IMR-90 (cell line): ENCODE measurements at regions of chr3 and their contacts with region 1.

Region 1: DNA sequence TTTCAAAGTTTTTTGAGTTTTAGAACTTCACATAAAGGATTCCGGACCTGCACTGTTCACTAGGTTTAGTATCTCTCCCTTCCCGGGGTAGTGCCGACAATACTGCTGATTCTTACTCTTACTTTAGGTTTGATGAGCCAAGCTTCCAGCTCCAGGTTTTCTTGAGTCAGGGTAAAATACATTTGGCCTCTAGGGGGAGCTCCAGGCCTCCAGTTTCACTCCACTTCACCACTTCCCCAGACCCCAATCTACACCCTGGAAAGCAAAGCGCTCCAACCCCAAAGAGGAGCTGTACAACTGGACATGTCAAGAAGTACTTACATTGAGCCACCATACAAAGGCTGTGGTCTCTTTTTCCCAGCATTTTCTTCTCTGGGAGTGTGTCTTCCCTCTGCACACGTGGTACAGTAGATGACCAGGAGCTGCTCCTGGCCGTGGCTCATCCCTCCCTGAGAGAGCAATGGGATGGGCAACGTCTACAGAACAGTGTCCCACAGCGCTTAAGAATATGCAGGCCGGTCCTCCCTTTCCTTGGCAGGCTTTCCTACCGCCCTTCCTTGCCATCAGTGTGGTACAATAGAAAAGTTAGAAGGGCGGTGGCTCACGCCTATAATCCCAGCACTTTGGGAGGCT is 93.9 kb upstream of the CCDC80 start:
- DNase-seq: peak; percentile 78
- ATAC-seq: peak; percentile 81
- H3K4me3 ChIP-seq: no peak overlapping the region
- H3K27ac ChIP-seq: no peak overlapping the region
- H3K4me1 ChIP-seq: 0 out of 2 replicates have a peak, but pooled peaks cover 1% of the 10 kb centered on the region
- H3K27me3 ChIP-seq: no peaks in the 10 kb centered on the region
- CTCF ChIP-seq: peak; percentile 82
- POLR2A ChIP-seq: no peak
- RAD21 ChIP-seq: peak; percentile 86

Region 2: GRCh38 chr3:112293368-112294321 is 441.2 kb before region 1 on chr3 and contains the start of gene SLC9C1:
- CTCF ChIA-PET with region 1: no interaction called
- POLR2A ChIA-PET with region 1: no interaction called
- dilution Hi-C with region 1: no loop called
- in situ Hi-C with region 1: no loop called
- intact Hi-C with region 1: no loop called
- DNase-seq: peak; percentile 74
- ATAC-seq: peak; percentile 85
- H3K4me3 ChIP-seq: peak within 1 kb of the TSS; percentile 36
- H3K27ac ChIP-seq: peak within 1 kb of the TSS; percentile 35; the same call in 1 of the 2 replicates
- H3K4me1 ChIP-seq: no peaks in the 10 kb centered on the region
- H3K27me3 ChIP-seq: no peaks in the 10 kb centered on the region
- CTCF ChIP-seq: peak; percentile 83
- POLR2A ChIP-seq: no peak
- RAD21 ChIP-seq: peak; percentile 77
- total RNA-seq, gene SLC9C1: not detected in 2 replicates

Region 3: GRCh38 chr3:112627419-112627818 is 107.4 kb before region 1 on chr3:
- CTCF ChIA-PET with region 1: no interaction called
- POLR2A ChIA-PET with region 1: no interaction called
- dilution Hi-C with region 1: no loop called
- in situ Hi-C with region 1: no loop called
- intact Hi-C with region 1: no loop called
- DNase-seq: no peak
- ATAC-seq: no peak
- H3K4me3 ChIP-seq: no peak overlapping the region
- H3K27ac ChIP-seq: no peak overlapping the region
- H3K4me1 ChIP-seq: peaks cover 2% of the 10 kb centered on the region
- H3K27me3 ChIP-seq: no peaks in the 10 kb centered on the region
- CTCF ChIP-seq: no peak
- POLR2A ChIP-seq: no peak
- RAD21 ChIP-seq: no peak

Region 4: GRCh38 chr3:112746675-112747280 is 11.9 kb after region 1 on chr3:
- CTCF ChIA-PET with region 1: interaction called, 10 read pairs
- POLR2A ChIA-PET with region 1: no interaction called
- dilution Hi-C with region 1: no loop called
- in situ Hi-C with region 1: no loop called
- intact Hi-C with region 1: no loop called
- DNase-seq: peak; percentile 77
- ATAC-seq: peak; percentile 72
- H3K4me3 ChIP-seq: no peak overlapping the region
- H3K27ac ChIP-seq: no peak overlapping the region
- H3K4me1 ChIP-seq: peaks cover 2% of the 10 kb centered on the region; the same call in 1 of the 2 replicates
- H3K27me3 ChIP-seq: no peaks in the 10 kb centered on the region
- CTCF ChIP-seq: no peak
- POLR2A ChIP-seq: no peak
- RAD21 ChIP-seq: no peak

Region 5: DNA sequence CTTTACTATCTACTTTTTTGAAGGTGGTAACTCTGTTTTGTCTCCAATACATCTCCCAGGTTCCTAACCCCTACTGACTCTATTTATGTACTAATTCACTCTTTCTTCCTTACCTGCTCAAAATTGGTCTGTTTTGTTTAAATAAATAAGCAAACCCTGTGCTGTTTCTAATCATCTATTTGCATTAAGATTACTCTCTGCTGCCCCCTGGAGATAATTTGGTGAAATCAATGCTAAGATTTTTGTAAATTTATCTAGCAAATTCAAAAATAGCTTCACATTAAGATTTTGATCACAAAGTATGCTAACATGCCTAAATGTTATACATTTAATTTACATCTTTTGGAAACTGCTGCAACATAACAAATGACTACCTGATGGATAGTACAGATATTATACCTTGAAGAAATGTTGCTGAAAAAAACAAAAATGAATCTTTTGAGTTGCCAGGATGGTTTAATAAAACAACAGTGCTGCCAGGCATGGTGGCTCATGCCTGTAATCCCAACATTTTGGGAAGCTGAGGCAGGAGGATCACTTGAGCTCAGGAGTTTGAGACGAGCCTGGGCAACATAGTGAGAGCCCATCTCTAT is 244.5 kb after region 1 on chr3:
- CTCF ChIA-PET with region 1: interaction called, 5 read pairs
- POLR2A ChIA-PET with region 1: no interaction called
- dilution Hi-C with region 1: no loop called
- in situ Hi-C with region 1: loop called (anchors 10 kb)
- intact Hi-C with region 1: loop called (anchors 1 kb)
- DNase-seq: peak; percentile 39
- ATAC-seq: no peak
- H3K4me3 ChIP-seq: no peak overlapping the region
- H3K27ac ChIP-seq: no peak overlapping the region
- H3K4me1 ChIP-seq: peaks cover 3% of the 10 kb centered on the region
- H3K27me3 ChIP-seq: no peaks in the 10 kb centered on the region
- CTCF ChIP-seq: peak; percentile 74
- POLR2A ChIP-seq: no peak
- RAD21 ChIP-seq: peak; percentile 61

Region 6: DNA sequence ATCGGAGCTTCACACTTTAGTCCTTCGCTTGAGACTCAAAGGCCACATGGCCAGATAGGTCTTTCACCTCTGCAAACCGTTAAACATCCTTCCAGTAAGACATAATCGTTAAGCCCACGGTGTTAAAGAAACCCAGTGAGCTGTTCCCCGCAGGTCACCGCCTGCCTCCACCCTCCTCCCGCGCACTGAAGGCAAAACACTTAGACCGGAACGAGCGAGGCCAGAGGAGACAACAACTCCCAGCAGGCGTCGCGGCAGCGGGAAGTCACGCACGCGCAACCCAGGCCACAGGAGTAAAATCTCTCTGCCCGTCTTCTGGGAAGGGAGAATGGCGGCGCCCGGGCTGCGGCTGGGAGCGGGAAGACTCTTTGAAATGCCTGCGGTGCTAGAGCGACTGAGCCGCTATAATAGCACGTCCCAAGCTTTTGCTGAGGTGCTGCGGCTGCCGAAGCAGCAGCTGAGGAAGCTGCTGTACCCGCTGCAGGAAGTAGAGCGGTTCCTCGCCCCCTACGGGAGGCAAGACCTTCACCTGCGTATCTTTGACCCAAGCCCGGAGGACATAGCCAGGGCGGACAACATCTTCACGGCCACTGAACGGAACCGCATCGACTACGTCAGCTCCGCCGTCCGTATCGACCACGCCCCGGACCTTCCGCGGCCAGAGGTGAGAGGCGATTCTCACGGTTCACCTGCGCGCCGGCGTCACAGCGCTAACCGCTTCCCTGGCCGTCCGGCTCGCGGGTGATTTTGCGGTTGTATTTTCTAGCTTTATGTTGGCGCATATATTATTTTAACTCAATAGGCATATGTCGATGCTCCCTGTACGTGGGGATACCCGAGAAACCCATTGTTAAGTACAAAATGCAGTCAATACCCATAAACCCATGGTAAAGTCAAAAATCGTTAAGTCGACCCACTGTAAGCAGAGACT is 256.1 kb after region 1 on chr3 and contains the start of gene GTPBP8:
- CTCF ChIA-PET with region 1: interaction called, 5 read pairs
- POLR2A ChIA-PET with region 1: no interaction called
- dilution Hi-C with region 1: no loop called
- in situ Hi-C with region 1: loop called (anchors 10 kb)
- intact Hi-C with region 1: loop called (anchors 5 kb)
- DNase-seq: peak; percentile 84
- ATAC-seq: peak; percentile 98
- H3K4me3 ChIP-seq: peak within 1 kb of the TSS; percentile 75
- H3K27ac ChIP-seq: peak within 1 kb of the TSS; percentile 86
- H3K4me1 ChIP-seq: no peaks in the 10 kb centered on the region
- H3K27me3 ChIP-seq: peaks cover 2% of the 10 kb centered on the region; the same call in 1 of the 2 replicates
- CTCF ChIP-seq: no peak
- POLR2A ChIP-seq: peak; percentile 83
- RAD21 ChIP-seq: no peak
- total RNA-seq, gene GTPBP8: 15.4 and 19.4 TPM in 2 replicates